Activated CD8-positive, alpha-beta T cell treated with anti-CD3 and anti-CD28 coated beads for 36 hours (primary cell): ENCODE measurements at regions of chr6 and their contacts with region 1.

Region 1: GRCh38 chr6:72616406-72617015 is 5.4 kb upstream of the KCNQ5 start:
- DNase-seq: no peak
- ATAC-seq: no peak
- H3K4me3 Mint-ChIP-seq: no peak overlapping the region
- H3K27ac Mint-ChIP-seq: no peak overlapping the region
- H3K4me1 Mint-ChIP-seq: peaks cover 46% of the 10 kb centered on the region
- H3K27me3 Mint-ChIP-seq: no peaks in the 10 kb centered on the region
- CTCF ChIP-seq: peak; percentile 80

Region 2: DNA sequence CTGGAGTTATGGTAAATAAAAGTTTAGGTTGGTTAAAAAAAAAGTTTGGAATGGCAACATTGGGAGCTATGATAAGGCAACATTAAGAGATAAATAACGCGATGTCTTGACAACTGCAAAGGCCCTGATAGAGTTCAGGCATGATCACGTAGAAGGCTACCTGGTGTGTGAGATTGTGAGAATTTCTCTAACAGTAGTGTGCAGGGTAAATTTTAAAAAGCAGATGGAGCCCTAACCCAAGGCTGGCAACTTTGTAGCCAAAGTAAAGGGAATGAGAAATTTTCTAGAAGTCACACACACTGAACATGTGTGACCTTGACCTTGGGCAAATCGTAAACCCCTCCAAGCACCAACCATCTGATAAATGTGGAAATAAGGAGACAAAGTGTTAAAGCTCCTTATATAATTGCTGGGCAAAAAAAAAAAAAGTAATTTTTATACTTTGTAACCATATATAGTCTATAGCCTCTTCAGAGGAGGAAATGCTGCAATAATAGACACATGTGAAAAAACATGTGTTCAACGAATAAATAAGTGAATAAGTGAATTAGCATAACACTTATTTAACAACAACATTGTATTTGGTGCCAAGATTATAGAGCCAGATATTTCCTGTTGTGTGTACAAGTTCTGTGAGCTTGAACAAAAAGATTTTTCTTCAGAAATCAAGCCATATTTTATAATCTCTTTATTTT is 23.6 kb after region 1 on chr6:
- CTCF ChIA-PET with region 1: interaction called, 11 read pairs
- POLR2A ChIA-PET with region 1: interaction called, 4 read pairs
- intact Hi-C with region 1: no loop called
- DNase-seq: no peak
- ATAC-seq: no peak
- H3K4me3 Mint-ChIP-seq: no peak overlapping the region
- H3K27ac Mint-ChIP-seq: no peak overlapping the region
- H3K4me1 Mint-ChIP-seq: peaks cover 18% of the 10 kb centered on the region
- H3K27me3 Mint-ChIP-seq: no peaks in the 10 kb centered on the region
- CTCF ChIP-seq: no peak

Region 3: DNA sequence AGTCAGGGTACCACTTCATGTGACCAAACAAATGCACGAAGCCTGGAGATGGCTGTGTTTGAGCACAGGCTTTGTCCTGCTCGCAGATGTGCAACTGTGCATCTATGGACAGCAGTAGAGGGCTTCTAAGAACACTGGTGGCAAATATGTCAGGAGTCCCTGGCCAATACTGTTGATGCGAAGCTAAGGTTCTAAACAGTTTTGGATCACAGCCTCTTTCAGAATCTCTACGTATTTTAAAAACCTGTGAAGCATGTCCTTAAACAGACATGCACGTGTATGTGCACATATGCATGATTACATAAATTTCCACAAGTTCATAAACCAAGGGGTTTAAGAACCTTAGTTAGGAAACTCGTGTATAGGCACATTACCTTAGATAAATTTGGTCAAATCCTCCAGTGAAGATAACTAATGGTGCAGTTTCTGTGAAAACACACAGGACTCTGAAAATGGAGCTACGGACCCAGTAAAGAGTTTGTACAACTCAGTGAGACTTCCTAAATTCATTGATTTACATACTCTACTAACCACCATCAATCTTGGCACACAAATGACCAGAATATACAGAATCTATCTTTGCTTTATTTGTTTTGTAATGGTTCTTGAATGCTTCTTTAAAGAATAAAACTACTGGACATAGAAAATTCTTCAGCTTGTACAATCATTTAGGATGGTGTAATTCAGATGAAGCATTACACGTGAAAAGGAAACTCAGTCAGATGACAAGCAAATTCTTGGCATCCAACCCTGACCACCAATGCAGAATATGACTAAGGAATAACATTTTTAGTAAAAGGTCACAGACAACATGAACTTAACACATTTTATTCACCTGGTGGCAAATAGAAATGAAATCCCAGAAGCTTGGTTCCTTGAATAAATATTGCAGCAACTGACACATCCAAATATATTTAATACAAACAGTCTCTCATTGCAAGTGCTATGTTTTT is 32.8 kb after region 1 on chr6:
- CTCF ChIA-PET with region 1: interaction called, 14 read pairs
- POLR2A ChIA-PET with region 1: interaction called, 24 read pairs
- intact Hi-C with region 1: no loop called
- DNase-seq: peak; percentile 53
- ATAC-seq: peak; percentile 83
- H3K4me3 Mint-ChIP-seq: no peak overlapping the region
- H3K27ac Mint-ChIP-seq: peak overlapping the region; percentile 76
- H3K4me1 Mint-ChIP-seq: peaks cover 37% of the 10 kb centered on the region
- H3K27me3 Mint-ChIP-seq: no peaks in the 10 kb centered on the region
- CTCF ChIP-seq: no peak

Region 4: GRCh38 chr6:73129653-73130443 is 513.3 kb after region 1 on chr6:
- CTCF ChIA-PET with region 1: interaction called, 151 read pairs
- POLR2A ChIA-PET with region 1: interaction called, 5 read pairs
- intact Hi-C with region 1: loop called (anchors 1 kb)
- DNase-seq: peak; percentile 91
- ATAC-seq: peak; percentile 96
- H3K4me3 Mint-ChIP-seq: no peak overlapping the region
- H3K27ac Mint-ChIP-seq: no peak overlapping the region
- H3K4me1 Mint-ChIP-seq: peaks cover 1% of the 10 kb centered on the region
- H3K27me3 Mint-ChIP-seq: no peaks in the 10 kb centered on the region
- CTCF ChIP-seq: peak; percentile 98